ENCODE measurements at regions of chr9 and their contacts with region 1.

Region 1: GRCh38 chr9:99601571-99602111 is 220.0 kb upstream of the NR4A3 start:
- DNase-seq: no peak
- ATAC-seq: no peak

Region 2: DNA sequence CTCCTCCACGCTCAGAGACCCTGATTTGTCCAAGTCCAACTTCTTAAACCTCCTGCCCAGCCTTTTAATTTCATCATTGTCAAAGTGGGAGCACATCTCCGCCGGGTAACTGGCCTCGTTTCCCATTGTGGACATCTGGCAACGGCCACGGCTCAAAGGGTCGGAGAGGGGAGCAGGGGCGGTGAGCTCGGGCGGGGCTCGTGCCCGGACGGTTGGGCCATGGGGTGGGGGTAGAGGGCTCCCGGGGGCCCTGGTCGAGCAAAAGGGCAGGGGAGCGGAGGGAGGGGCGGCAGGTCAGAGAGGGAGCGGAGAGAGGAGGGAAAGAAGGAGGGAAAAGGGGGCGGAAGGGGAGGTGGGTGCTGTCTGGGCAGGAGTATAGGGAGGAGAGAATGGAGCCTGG is 1993.2 kb after region 1 on chr9 and contains the start of gene PPP3R2:
- intact Hi-C with region 1: loop called (anchors 5 kb)
- DNase-seq: no peak
- ATAC-seq: no peak
- total RNA-seq, gene PPP3R2: not detected